Psoas muscle (tissue), 8 donors: ENCODE measurements at regions of chr17 and their contacts with region 1.

Region 1: GRCh38 chr17:53543472-53543871 is 279.3 kb upstream of the KIF2B start:
- DNase-seq: no peak
- ATAC-seq: no peak
- H3K4me3 ChIP-seq: no peak overlapping the region
- H3K27ac ChIP-seq: no peak overlapping the region
- H3K4me1 ChIP-seq: no peaks in the 10 kb centered on the region
- H3K27me3 ChIP-seq: no peaks in the 10 kb centered on the region
- CTCF ChIP-seq: no peak

Region 2: GRCh38 chr17:53574038-53574437 is 30.6 kb after region 1 on chr17:
- intact Hi-C with region 1: loop called in 1 of 2 experiments (anchors 1 kb)
- DNase-seq: no peak
- ATAC-seq: no peak
- H3K4me3 ChIP-seq: no peak overlapping the region
- H3K27ac ChIP-seq: no peak overlapping the region
- H3K4me1 ChIP-seq: no peaks in the 10 kb centered on the region
- H3K27me3 ChIP-seq: no peaks in the 10 kb centered on the region
- CTCF ChIP-seq: no peak